Activated B cell treated with CpG ODN at 0.5 μM for 24 hours (primary cell): ENCODE measurements at regions of chr9 and their contacts with region 1.

Region 1: GRCh38 chr9:112097712-112098688 is 77.1 kb downstream of the SUSD1 start:
- DNase-seq: no peak
- ATAC-seq: peak; percentile 95
- H3K4me3 Mint-ChIP-seq: no peak overlapping the region
- H3K27ac Mint-ChIP-seq: no peak overlapping the region
- H3K4me1 Mint-ChIP-seq: peaks cover 38% of the 10 kb centered on the region
- H3K27me3 Mint-ChIP-seq: no peaks in the 10 kb centered on the region
- CTCF ChIP-seq: peak; percentile 34

Region 2: DNA sequence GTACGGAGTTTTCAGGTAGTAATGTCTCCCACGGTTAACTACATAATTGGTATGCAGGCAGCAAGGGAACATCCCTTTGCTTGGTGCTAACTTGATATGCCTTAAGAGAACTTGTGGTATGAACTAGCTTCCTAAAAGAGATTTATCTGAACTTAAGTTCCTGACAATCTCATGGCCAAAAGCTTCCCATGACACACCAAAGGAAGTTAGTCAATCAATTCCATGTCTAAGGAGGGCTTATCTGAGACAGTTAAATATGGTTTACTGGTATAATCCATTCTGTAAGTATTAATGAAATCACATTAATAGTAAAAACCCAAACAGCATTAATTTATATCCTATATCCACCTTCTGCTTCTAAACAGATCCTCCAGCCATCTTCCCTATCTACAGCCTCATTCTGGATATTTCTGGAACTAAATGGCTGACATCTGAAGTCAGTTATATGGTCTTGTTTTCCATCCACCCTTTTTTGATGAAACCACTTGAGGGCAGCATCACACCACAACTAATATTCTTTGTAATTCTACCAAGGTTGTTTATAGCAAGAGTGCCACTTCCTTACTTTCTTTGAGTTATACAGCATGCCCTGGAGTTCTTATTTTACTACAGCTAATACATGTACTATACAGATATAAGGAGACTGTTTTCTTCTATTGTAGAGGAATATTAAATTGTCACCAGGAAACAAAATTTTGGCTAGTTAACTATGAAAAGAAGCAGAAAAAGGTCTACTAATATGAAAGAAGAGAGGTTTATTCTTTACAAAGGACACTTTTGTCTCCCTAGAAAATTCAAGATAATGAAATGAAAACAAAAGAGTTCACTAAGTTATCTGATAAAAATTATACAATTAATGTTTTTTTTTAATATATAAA is 338.0 kb before region 1 on chr9:
- CTCF ChIA-PET with region 1: interaction called, 15 read pairs
- POLR2A ChIA-PET with region 1: no interaction called
- intact Hi-C with region 1: loop called (anchors 1 kb)
- DNase-seq: no peak
- ATAC-seq: peak; percentile 84
- H3K4me3 Mint-ChIP-seq: no peak overlapping the region
- H3K27ac Mint-ChIP-seq: no peak overlapping the region
- H3K4me1 Mint-ChIP-seq: peaks cover 4% of the 10 kb centered on the region
- H3K27me3 Mint-ChIP-seq: no peaks in the 10 kb centered on the region
- CTCF ChIP-seq: peak; percentile 55

Region 3: DNA sequence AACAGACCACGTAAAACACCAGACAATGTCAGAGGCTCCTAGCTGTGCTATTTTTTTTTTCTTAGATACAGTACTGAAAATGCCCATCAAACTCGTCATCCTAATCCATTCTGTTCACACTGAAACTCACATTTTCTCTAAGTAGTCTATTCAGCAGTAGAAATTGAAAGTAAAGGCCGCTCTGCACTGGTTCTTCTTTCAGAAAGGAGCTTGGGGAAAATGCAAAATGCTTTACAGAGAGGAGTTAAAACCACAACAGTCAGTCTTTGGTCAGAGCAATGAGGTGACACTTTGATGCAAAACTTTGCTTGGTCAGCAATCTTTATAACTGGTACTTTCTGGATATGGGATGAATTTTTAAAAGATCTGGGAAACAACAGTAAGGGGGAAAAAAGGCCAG is 120.9 kb after region 1 on chr9:
- CTCF ChIA-PET with region 1: interaction called, 5 read pairs
- POLR2A ChIA-PET with region 1: no interaction called
- intact Hi-C with region 1: loop called (anchors 1 kb)
- DNase-seq: no peak
- ATAC-seq: peak; percentile 66
- H3K4me3 Mint-ChIP-seq: peak overlapping the region; percentile 1
- H3K27ac Mint-ChIP-seq: peak overlapping the region; percentile 26
- H3K4me1 Mint-ChIP-seq: peaks cover 20% of the 10 kb centered on the region
- H3K27me3 Mint-ChIP-seq: no peaks in the 10 kb centered on the region
- CTCF ChIP-seq: no peak

Region 4: DNA sequence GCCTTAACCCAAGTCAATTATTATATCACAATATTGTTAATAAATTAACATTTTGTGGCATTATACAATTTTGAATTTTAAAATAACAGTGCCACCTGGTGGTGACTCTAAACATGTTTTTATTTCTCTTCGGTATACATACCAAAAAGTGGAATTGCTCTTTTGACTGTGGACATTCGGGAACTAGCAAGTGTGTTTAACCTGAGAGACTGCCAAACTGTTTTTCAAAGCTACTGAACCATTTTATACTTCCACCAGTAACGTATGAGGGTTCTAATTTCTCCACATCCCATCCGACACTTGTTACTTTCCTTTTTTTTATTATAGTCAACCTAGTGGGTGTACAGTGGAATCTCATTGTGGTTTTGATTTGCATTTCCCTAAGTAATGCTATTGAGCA is 263.6 kb after region 1 on chr9:
- CTCF ChIA-PET with region 1: interaction called, 59 read pairs
- POLR2A ChIA-PET with region 1: no interaction called
- intact Hi-C with region 1: loop called (anchors 1 kb)
- DNase-seq: no peak
- ATAC-seq: peak; percentile 40
- H3K4me3 Mint-ChIP-seq: peak overlapping the region; percentile 41
- H3K27ac Mint-ChIP-seq: no peak overlapping the region
- H3K4me1 Mint-ChIP-seq: peaks cover 2% of the 10 kb centered on the region
- H3K27me3 Mint-ChIP-seq: no peaks in the 10 kb centered on the region
- CTCF ChIP-seq: peak; percentile 59

Region 5: GRCh38 chr9:112443200-112443599 is 345.2 kb after region 1 on chr9:
- CTCF ChIA-PET with region 1: no interaction called
- POLR2A ChIA-PET with region 1: no interaction called
- intact Hi-C with region 1: loop called (anchors 10 kb)
- DNase-seq: no peak
- ATAC-seq: no peak
- H3K4me3 Mint-ChIP-seq: no peak overlapping the region
- H3K27ac Mint-ChIP-seq: no peak overlapping the region
- H3K4me1 Mint-ChIP-seq: peaks cover 30% of the 10 kb centered on the region
- H3K27me3 Mint-ChIP-seq: no peaks in the 10 kb centered on the region
- CTCF ChIP-seq: no peak

Region 6: GRCh38 chr9:112486221-112487007 is 388.4 kb after region 1 on chr9 and contains the start of gene KIAA1958:
- CTCF ChIA-PET with region 1: no interaction called
- POLR2A ChIA-PET with region 1: no interaction called
- intact Hi-C with region 1: loop called (anchors 5 kb)
- DNase-seq: peak; percentile 75
- ATAC-seq: peak; percentile 89
- H3K4me3 Mint-ChIP-seq: peak within 1 kb of the TSS; percentile 97
- H3K27ac Mint-ChIP-seq: peak within 1 kb of the TSS; percentile 89
- H3K4me1 Mint-ChIP-seq: peaks cover 19% of the 10 kb centered on the region
- H3K27me3 Mint-ChIP-seq: no peaks in the 10 kb centered on the region
- CTCF ChIP-seq: no peak
- total RNA-seq, gene KIAA1958: 5.8 and 7.4 TPM in 2 replicates